Adrenal gland (tissue), 19 donors: ENCODE measurements at regions of chr11 and their contacts with region 1.

Region 1: DNA sequence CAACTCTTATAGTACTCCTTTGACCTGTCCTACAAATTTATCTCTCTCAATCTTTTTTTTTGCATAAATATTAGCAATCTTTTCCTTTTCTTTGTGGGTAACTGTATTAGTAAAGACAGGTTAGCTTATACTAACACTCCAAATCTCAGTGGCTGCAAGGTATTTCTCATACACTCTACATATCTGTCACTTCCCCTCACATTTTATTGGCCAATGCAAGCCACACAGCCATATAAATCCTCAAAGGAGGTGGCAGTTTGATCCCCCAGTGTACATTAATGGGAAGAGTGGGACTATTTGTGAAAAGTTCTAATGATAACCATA is 42.6 kb upstream of the EED start:
- DNase-seq: no peak
- H3K4me3 ChIP-seq: peak overlapping the region in 1 of 4 donors; percentile 41
- H3K27ac ChIP-seq: peak overlapping the region in 2 of 5 donors; percentile 62
- H3K4me1 ChIP-seq: no peaks in the 10 kb centered on the region
- H3K27me3 ChIP-seq: no peaks in the 10 kb centered on the region
- CTCF ChIP-seq: no peak
- POLR2A ChIP-seq: no peak

Region 2: DNA sequence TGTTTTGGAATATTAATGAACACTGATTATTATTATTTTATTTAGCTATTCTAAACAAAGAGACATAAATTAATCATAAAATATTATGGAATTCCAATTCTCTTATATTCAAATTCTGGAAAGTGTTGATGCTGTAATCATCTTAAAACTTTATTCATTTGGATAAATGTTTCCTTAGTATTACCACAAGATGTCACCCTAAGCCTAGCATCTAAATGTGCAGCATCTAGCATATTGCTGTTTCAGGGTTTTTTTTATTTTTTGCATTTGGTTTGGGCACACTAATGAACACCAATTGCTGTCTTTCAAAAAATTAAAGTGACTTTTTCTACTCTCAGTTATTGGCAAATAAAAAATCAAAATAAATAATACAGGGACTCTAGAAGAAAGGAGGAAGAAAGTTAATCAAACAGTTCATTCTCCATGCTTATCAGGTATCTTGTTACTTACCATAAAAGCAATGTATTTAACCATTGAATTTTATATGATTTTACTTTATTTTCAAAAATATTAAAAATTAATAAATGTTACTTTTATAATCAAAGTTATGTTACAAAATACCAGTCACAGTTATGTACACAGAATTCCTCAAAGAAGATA is 606.6 kb before region 1 on chr11:
- intact Hi-C with region 1: loop called in 1 of 2 experiments (anchors 10 kb)
- DNase-seq: no peak
- H3K4me3 ChIP-seq: no peak overlapping the region
- H3K27ac ChIP-seq: no peak overlapping the region
- H3K4me1 ChIP-seq: peaks cover 0 to 8% of the 10 kb centered on the region in 2 donors
- H3K27me3 ChIP-seq: no peaks in the 10 kb centered on the region
- CTCF ChIP-seq: peak; percentile 43 to 78 (median 72)
- POLR2A ChIP-seq: no peak

Region 3: DNA sequence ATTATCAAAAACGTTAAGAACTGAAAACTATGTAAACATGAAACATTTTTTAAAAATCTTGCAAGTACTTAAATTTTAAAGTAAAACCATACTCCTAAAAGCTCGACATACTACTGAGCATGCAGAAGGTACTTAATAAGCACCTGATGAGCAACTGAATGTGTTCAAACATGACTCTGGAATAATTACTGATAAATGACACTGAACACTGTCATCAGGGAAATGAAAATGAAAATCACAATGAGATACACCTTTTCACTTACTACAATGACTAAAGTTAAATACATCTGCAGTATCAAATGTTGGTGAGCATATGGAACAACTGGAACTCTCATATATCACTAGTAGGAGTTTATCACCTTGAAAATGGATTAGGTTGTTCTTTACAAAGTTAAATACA is 198.3 kb before region 1 on chr11:
- intact Hi-C with region 1: no loop called
- DNase-seq: no peak
- H3K4me3 ChIP-seq: no peak overlapping the region
- H3K27ac ChIP-seq: no peak overlapping the region
- H3K4me1 ChIP-seq: no peaks in the 10 kb centered on the region
- H3K27me3 ChIP-seq: no peaks in the 10 kb centered on the region
- CTCF ChIP-seq: no peak
- POLR2A ChIP-seq: no peak

Region 4: DNA sequence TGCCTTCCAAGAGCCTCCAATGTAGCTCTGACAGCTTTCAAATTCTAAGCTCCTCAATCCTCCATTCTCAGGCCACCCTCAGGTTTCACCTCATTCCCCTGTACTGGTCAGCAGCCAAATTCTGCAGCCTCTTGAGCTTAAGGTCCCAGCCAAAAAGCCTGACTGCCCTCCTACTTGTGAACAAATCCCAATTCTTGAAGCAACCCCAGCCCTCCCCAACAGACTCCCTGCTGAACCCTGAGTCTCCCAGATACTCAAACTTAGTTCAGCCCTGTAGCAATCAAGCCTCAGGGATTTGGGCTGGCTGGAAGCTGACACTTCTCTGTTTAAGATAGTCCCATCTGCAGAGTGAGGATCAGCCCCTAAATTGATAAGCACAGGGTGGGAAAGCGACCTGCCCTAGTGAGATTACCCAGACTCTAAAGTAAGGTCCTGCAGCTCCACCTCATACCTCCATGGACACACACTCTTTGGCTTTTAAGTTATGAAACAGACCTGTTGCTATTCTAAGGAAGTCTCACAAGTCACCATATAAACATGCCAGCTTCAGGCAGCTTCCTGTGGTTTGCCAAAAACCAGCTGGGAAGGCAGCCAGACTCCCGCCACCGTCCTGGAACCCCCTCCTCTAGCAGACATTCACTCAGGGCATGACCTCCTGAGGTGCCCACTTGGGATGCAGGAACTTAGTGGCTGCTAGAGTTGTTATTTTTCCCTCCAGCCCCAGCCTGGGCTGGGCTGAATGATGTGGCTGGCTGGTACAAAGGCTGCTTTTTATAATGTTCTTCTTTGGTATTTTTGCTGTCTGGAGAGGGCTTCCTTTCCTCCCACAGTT is 50.6 kb before region 1 on chr11:
- intact Hi-C with region 1: no loop called
- DNase-seq: no peak
- H3K4me3 ChIP-seq: no peak overlapping the region
- H3K27ac ChIP-seq: peak overlapping the region in 1 of 5 donors; percentile 15
- H3K4me1 ChIP-seq: peaks cover 0 to 25% of the 10 kb centered on the region in 2 donors
- H3K27me3 ChIP-seq: no peaks in the 10 kb centered on the region
- CTCF ChIP-seq: no peak
- POLR2A ChIP-seq: no peak

Region 5: DNA sequence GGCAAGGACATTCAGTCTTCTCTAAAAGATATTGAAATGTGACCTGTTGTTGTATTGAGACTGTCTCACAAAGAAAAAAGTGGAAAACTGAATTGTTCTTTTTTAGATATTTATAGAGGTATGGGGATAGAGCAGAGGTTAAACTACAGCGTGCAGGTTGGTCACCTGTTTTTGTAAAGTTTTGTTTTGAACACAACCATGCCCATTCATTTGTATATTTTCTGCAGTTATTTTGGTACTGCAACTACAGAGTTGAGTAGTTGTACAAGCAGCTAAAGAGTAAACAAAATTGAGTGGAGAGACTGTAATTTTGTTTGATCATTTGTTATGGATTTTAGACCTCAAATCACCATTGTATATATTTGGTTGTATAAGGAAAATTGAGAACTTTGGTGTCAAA is 53.9 kb after region 1 on chr11:
- intact Hi-C with region 1: no loop called
- DNase-seq: no peak
- H3K4me3 ChIP-seq: no peak overlapping the region
- H3K27ac ChIP-seq: no peak overlapping the region
- H3K4me1 ChIP-seq: peaks cover 0 to 9% of the 10 kb centered on the region in 2 donors
- H3K27me3 ChIP-seq: no peaks in the 10 kb centered on the region
- CTCF ChIP-seq: no peak
- POLR2A ChIP-seq: no peak

Region 6: DNA sequence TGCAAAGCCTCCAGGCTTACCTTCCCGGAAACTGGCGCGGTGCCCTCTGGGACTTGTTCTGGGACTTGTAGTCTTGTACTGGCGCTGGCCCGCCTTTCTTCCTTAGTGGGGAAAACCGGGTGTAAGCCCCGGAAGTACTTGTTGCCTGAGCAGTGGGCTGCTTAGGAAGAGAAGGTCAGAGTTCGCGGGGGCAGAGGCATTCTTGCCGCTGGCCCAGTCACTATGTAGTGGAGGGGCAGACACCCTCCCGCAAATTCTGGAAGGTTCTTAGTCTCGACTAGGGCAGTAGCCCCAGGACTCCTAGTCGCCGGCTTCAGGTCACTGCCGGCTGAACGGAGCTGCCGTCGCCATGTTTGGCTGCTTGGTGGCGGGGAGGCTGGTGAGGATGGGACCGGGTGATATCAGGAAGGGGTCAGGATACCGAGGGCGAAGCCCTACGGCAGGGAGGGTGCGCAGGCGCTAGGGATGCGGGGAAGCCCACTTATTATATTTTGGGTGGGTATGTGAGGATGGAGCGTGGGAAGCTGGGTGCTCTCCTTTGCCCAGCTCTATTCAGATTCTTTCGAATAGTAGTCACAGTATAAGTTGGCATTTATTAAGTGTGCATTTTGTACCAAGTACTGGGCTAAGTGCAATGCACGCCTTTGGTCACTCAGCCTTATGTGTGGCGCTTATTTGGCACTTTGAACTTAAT is 100.3 kb after region 1 on chr11 and contains the start of gene HIKESHI:
- intact Hi-C with region 1: no loop called
- DNase-seq: peak; percentile 99 to 100 (median 100)
- H3K4me3 ChIP-seq: peak within 1 kb of the TSS; percentile 63 to 100 (median 84)
- H3K27ac ChIP-seq: peak within 1 kb of the TSS in 4 of 5 donors; percentile 79 to 82 (median 81)
- H3K4me1 ChIP-seq: peaks cover 11 to 14% of the 10 kb centered on the region in 2 donors
- H3K27me3 ChIP-seq: no peaks in the 10 kb centered on the region
- CTCF ChIP-seq: no peak
- POLR2A ChIP-seq: peak; percentile 30 to 73
- total RNA-seq, gene HIKESHI: 30.4 to 48.2 (median 34.0) TPM